Heart right ventricle (tissue), 16 donors: ENCODE measurements at regions of chr21 and their contacts with region 1.

Region 1: GRCh38 chr21:32520875-32521735 is 64.2 kb downstream of the TCP10L start:
- DNase-seq: peak; percentile 91 to 96
- ATAC-seq: peak; percentile 65 to 81 (median 78)
- H3K4me3 ChIP-seq: peak overlapping the region in 2 of 10 donors; percentile 2 to 7
- H3K27ac ChIP-seq: peak overlapping the region; percentile 43 to 93 (median 88)
- H3K4me1 ChIP-seq: peaks cover 30 to 74% (median 66%) of the 10 kb centered on the region in 9 donors
- H3K27me3 ChIP-seq: no peaks in the 10 kb centered on the region
- CTCF ChIP-seq: no peak

Region 2: GRCh38 chr21:32457360-32457840 is 63.7 kb before region 1 on chr21:
- intact Hi-C with region 1: no loop called
- DNase-seq: peak; percentile 36 to 52
- ATAC-seq: peak in 7 of 8 donors; percentile 9 to 61 (median 32)
- H3K4me3 ChIP-seq: no peak overlapping the region
- H3K27ac ChIP-seq: peak overlapping the region; percentile 27 to 83 (median 64)
- H3K4me1 ChIP-seq: peaks cover 15 to 36% (median 22%) of the 10 kb centered on the region in 9 donors
- H3K27me3 ChIP-seq: no peaks in the 10 kb centered on the region
- CTCF ChIP-seq: peak in 5 of 9 donors; percentile 8 to 43 (median 34)

Region 3: DNA sequence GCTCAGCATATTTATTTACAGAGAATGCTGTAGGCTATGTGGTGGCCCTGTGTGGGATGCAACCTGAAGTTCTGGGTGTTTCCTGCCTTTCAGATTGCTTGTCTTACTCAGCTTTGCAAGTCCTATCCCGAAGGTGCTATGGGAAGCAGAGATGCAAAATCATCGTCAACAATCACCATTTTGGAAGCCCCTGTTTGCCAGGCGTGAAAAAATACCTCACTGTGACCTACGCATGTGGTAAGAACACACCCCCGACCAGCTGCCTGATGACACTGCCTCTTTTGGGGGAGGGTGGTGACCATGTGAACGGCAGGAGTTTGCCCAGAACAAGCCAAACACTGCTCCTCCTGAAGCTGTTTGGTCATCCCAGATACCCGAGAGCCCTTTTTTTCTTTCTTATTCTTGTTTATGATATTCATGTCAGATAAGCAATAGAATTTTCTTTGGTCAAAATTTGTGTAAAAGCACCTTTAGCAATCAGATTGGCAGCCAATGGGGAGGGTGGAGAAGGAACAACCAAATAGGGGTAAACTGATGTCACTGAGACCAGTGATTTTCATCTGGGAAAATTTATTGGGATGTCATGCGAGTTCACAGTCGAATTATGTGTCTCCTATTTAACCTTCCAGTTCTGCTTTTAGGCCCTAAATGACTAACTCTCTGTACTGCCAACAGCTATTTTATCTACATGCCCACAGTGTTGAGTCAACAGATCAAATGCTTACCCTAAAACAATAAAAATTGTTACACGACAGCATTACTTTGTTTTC is 26.0 kb before region 1 on chr21:
- intact Hi-C with region 1: loop called in 1 of 10 experiments (anchors 1 kb)
- DNase-seq: no peak
- ATAC-seq: no peak
- H3K4me3 ChIP-seq: no peak overlapping the region
- H3K27ac ChIP-seq: peak overlapping the region in 4 of 10 donors; percentile 8 to 62 (median 16)
- H3K4me1 ChIP-seq: peaks cover 11 to 76% (median 44%) of the 10 kb centered on the region in 9 donors
- H3K27me3 ChIP-seq: no peaks in the 10 kb centered on the region
- CTCF ChIP-seq: no peak